ENCODE measurements at regions of chr16 and their contacts with region 1.

Region 1: GRCh38 chr16:22190776-22191531 is 15.1 kb upstream of the EEF2K start:
- DNase-seq: peak; percentile 91 to 100 (median 99)
- ATAC-seq: peak; percentile 78
- H3K4me3 ChIP-seq: peak overlapping the region; percentile 92
- H3K4me3 Mint-ChIP-seq: peak overlapping the region; percentile 78 to 99 (median 95)
- H3K27ac ChIP-seq: peak overlapping the region; percentile 99
- H3K27ac Mint-ChIP-seq: peak overlapping the region; percentile 98 to 100 (median 100)
- H3K4me1 ChIP-seq: peaks cover 47 to 59% of the 10 kb centered on the region in 2 donors
- H3K4me1 Mint-ChIP-seq: peaks cover 41 to 74% (median 62%) of the 10 kb centered on the region in 7 donors
- H3K27me3 ChIP-seq: no peaks in the 10 kb centered on the region
- H3K27me3 Mint-ChIP-seq: peaks cover 0 to 5% (median 0%) of the 10 kb centered on the region in 5 donors

Region 2: GRCh38 chr16:21158208-21159110 is 1032.5 kb before region 1 on chr16 and contains the start of gene LDAF1:
- CTCF ChIA-PET with region 1: no interaction called
- POLR2A ChIA-PET with region 1: no interaction called
- intact Hi-C with region 1: loop called in 1 of 2 experiments (anchors 1 kb)
- DNase-seq: peak; percentile 59 to 86 (median 74)
- ATAC-seq: peak; percentile 97
- H3K4me3 ChIP-seq: peak within 1 kb of the TSS; percentile 62
- H3K4me3 Mint-ChIP-seq: peak within 1 kb of the TSS; percentile 88 to 96 (median 94)
- H3K27ac ChIP-seq: peak within 1 kb of the TSS; percentile 65
- H3K27ac Mint-ChIP-seq: peak within 1 kb of the TSS; percentile 60 to 91 (median 71)
- H3K4me1 ChIP-seq: peaks cover 9 to 12% of the 10 kb centered on the region in 2 donors
- H3K4me1 Mint-ChIP-seq: peaks cover 10 to 35% (median 30%) of the 10 kb centered on the region in 7 donors
- H3K27me3 ChIP-seq: no peaks in the 10 kb centered on the region
- H3K27me3 Mint-ChIP-seq: no peaks in the 10 kb centered on the region
- total RNA-seq, gene LDAF1: 8.2 to 16.9 (median 11.0) TPM

Region 3: GRCh38 chr16:21656795-21657768 is 533.9 kb before region 1 on chr16:
- CTCF ChIA-PET with region 1: no interaction called
- POLR2A ChIA-PET with region 1: interaction called, 4 read pairs
- intact Hi-C with region 1: loop called in 1 of 2 experiments (anchors 2 kb)
- DNase-seq: peak in 7 of 9 donors; percentile 50 to 71 (median 66)
- ATAC-seq: peak; percentile 72
- H3K4me3 ChIP-seq: no peak overlapping the region
- H3K4me3 Mint-ChIP-seq: peak overlapping the region in 5 of 10 donors; percentile 7 to 48 (median 33)
- H3K27ac ChIP-seq: no peak overlapping the region
- H3K27ac Mint-ChIP-seq: peak overlapping the region in 8 of 9 donors; percentile 5 to 87 (median 26)
- H3K4me1 ChIP-seq: peaks cover 16 to 24% of the 10 kb centered on the region in 2 donors
- H3K4me1 Mint-ChIP-seq: peaks cover 20 to 45% (median 37%) of the 10 kb centered on the region in 7 donors
- H3K27me3 ChIP-seq: no peaks in the 10 kb centered on the region
- H3K27me3 Mint-ChIP-seq: no peaks in the 10 kb centered on the region

Region 4: DNA sequence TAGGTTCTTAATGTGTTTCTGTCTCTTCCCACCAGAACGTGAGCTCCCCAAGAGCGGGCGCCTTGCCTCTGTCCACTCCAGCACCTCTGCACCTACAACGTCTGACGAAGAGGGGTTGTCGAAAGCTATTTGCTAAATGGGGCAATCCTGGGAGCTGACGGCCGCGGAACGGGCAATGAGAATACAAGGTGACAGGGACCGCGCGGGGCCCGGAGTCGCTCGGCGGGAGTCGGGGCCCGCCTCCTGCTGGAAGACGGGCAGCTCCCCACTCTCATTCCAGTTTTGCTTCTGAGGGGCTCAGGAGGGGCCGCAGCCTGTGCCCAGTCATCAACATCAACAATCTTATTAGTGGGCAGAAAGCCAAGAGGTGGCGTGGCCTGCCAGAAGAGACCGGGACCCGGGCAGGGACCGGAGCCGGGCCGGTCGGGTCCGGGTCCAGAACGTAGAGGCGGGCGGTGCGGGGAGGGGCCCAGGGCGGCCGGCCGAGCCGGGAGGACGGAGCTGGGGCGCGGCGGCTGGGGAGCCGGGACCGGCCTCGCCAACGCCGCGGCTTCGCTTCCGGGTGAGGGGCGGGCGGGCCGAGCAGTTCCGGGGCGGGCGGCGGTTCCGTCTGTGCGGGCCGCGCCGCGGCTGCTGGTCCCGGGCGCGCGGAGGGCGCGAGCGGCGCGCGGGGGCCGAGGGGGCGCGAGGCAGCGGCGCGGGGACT is 183.3 kb before region 1 on chr16 and contains the start of gene MOSMO:
- CTCF ChIA-PET with region 1: interaction called, 31 read pairs
- POLR2A ChIA-PET with region 1: interaction called, 40 read pairs
- intact Hi-C with region 1: loop called (anchors 1 kb)
- DNase-seq: peak; percentile 38 to 78 (median 59)
- ATAC-seq: peak; percentile 94
- H3K4me3 ChIP-seq: peak within 1 kb of the TSS; percentile 79
- H3K4me3 Mint-ChIP-seq: peak within 1 kb of the TSS; percentile 85 to 92 (median 89)
- H3K27ac ChIP-seq: peak within 1 kb of the TSS; percentile 93
- H3K27ac Mint-ChIP-seq: peak within 1 kb of the TSS; percentile 64 to 91 (median 89)
- H3K4me1 ChIP-seq: peaks cover 8 to 20% of the 10 kb centered on the region in 2 donors
- H3K4me1 Mint-ChIP-seq: peaks cover 19 to 58% (median 51%) of the 10 kb centered on the region in 7 donors
- H3K27me3 ChIP-seq: no peaks in the 10 kb centered on the region
- H3K27me3 Mint-ChIP-seq: peaks cover 0 to 12% (median 0%) of the 10 kb centered on the region in 5 donors
- total RNA-seq, gene MOSMO: 8.5 to 24.0 (median 13.5) TPM

Region 5: DNA sequence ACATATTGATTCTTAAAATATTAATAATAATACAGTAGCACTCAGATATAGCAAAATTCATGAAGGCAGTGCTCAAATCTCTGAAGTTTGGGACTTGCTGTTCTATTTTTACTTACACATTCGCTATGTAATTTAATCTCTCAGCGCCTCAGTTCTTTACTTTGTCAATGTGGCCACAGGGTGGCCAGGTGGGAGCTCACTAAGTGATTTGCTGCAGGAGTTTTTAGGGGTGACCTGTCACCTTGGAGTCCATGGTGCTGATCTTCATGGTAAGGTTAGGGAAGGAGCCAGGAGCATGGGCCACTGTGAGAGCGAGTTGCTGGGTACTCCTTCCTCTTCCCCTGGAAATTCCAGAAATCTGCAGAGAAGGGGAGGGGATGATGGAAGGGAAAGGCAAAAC is 70.5 kb before region 1 on chr16:
- CTCF ChIA-PET with region 1: no interaction called
- POLR2A ChIA-PET with region 1: no interaction called
- intact Hi-C with region 1: loop called in 1 of 2 experiments (anchors 2 kb)
- DNase-seq: no peak
- ATAC-seq: no peak
- H3K4me3 ChIP-seq: no peak overlapping the region
- H3K4me3 Mint-ChIP-seq: no peak overlapping the region
- H3K27ac ChIP-seq: no peak overlapping the region
- H3K27ac Mint-ChIP-seq: no peak overlapping the region
- H3K4me1 ChIP-seq: no peaks in the 10 kb centered on the region
- H3K4me1 Mint-ChIP-seq: peaks cover 0 to 5% (median 0%) of the 10 kb centered on the region in 7 donors
- H3K27me3 ChIP-seq: no peaks in the 10 kb centered on the region
- H3K27me3 Mint-ChIP-seq: peaks cover 0 to 10% (median 5%) of the 10 kb centered on the region in 5 donors

Region 6: GRCh38 chr16:22240023-22240710 is 49.2 kb after region 1 on chr16:
- CTCF ChIA-PET with region 1: interaction called, 3 read pairs
- POLR2A ChIA-PET with region 1: interaction called, 5 read pairs
- intact Hi-C with region 1: loop called (anchors 2 kb)
- DNase-seq: no peak
- ATAC-seq: no peak
- H3K4me3 ChIP-seq: no peak overlapping the region
- H3K4me3 Mint-ChIP-seq: peak overlapping the region in 4 of 10 donors; percentile 18 to 35 (median 22)
- H3K27ac ChIP-seq: no peak overlapping the region
- H3K27ac Mint-ChIP-seq: peak overlapping the region; percentile 12 to 95 (median 77)
- H3K4me1 ChIP-seq: peaks cover 12 to 30% of the 10 kb centered on the region in 2 donors
- H3K4me1 Mint-ChIP-seq: peaks cover 18 to 39% (median 33%) of the 10 kb centered on the region in 7 donors
- H3K27me3 ChIP-seq: no peaks in the 10 kb centered on the region
- H3K27me3 Mint-ChIP-seq: no peaks in the 10 kb centered on the region

Region 7: DNA sequence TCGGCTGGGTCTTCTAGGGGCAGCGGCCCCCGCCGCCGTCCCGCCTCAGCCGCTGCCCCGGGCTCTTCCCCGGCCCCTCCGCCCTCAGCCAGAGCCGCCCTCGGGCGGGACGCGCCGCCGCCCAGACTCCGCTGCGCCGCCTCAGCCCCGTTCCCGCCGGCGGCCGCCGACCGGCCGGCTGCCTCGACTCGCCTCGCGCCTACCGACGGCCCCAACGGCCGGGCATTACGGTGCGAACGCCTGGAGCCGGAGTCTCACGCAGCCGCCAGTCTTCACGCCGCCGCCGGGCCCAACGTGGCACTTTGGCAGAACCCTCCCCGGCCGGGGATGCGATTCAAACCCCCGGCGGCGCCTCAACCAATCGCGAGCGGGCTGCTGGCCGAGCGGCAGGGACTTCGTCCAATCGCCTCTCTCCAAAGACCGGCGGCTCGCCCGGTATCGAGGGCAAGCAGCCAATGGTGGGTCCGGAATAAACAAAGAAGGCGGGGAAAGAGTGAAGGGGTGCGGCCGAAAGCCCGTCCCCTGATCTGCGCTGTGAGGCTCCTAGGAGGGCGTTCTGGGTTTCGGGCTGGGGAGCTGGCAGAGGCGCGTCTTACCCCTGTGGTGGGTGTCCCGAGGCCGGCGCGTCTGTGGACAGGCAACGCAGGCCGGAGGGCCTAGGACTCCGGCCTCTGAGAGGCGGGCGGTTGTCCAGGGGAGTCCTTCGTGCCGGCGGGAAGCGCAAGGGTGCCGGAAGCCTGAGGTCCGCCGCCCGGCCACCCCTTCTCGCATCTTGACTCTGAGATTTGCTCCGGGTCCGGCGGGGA is 183.6 kb after region 1 on chr16 and contains the start of gene CDR2:
- CTCF ChIA-PET with region 1: no interaction called
- POLR2A ChIA-PET with region 1: interaction called, 6 read pairs
- intact Hi-C with region 1: loop called (anchors 1 to 5 kb)
- DNase-seq: peak; percentile 94 to 99 (median 98)
- ATAC-seq: peak; percentile 97
- H3K4me3 ChIP-seq: peak within 1 kb of the TSS; percentile 77
- H3K4me3 Mint-ChIP-seq: peak within 1 kb of the TSS; percentile 93 to 99 (median 98)
- H3K27ac ChIP-seq: peak within 1 kb of the TSS; percentile 86
- H3K27ac Mint-ChIP-seq: peak within 1 kb of the TSS; percentile 91 to 98 (median 93)
- H3K4me1 ChIP-seq: peaks cover 31 to 34% of the 10 kb centered on the region in 2 donors
- H3K4me1 Mint-ChIP-seq: peaks cover 17 to 56% (median 48%) of the 10 kb centered on the region in 7 donors
- H3K27me3 ChIP-seq: no peaks in the 10 kb centered on the region
- H3K27me3 Mint-ChIP-seq: peaks cover 0 to 5% (median 0%) of the 10 kb centered on the region in 5 donors
- total RNA-seq, gene CDR2: 28.7 to 91.9 (median 65.6) TPM

Region 8: DNA sequence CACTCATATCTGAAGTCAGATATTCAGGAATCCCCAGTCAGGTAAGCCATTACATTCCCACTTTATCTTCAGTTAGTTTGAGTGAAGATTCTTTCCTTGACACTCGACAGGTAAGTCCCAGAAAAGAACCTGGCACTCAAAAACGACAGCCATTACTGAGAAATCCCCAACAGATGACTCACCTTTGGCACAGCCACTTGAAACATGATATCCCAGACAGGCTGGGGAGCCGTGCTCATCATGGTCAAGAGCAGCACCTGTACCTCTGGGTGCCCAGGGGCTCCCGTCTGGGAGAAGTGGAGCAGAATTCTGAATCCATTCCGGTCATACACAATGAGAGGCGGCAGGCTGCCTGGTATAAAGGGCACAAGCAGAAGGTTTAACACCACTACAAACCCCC is 1278.9 kb after region 1 on chr16:
- CTCF ChIA-PET with region 1: no interaction called
- POLR2A ChIA-PET with region 1: no interaction called
- intact Hi-C with region 1: no loop called
- DNase-seq: no peak
- ATAC-seq: no peak
- H3K4me3 ChIP-seq: no peak overlapping the region
- H3K4me3 Mint-ChIP-seq: no peak overlapping the region
- H3K27ac ChIP-seq: no peak overlapping the region
- H3K27ac Mint-ChIP-seq: peak overlapping the region in 3 of 9 donors; percentile 54 to 65 (median 55)
- H3K4me1 ChIP-seq: no peaks in the 10 kb centered on the region
- H3K4me1 Mint-ChIP-seq: no peaks in the 10 kb centered on the region
- H3K27me3 ChIP-seq: no peaks in the 10 kb centered on the region
- H3K27me3 Mint-ChIP-seq: no peaks in the 10 kb centered on the region

Measured in naive thymus-derived CD4-positive, alpha-beta T cell (primary cell).